A549 (cell line): ENCODE measurements at regions of chr2 and their contacts with region 1.

Region 1: DNA sequence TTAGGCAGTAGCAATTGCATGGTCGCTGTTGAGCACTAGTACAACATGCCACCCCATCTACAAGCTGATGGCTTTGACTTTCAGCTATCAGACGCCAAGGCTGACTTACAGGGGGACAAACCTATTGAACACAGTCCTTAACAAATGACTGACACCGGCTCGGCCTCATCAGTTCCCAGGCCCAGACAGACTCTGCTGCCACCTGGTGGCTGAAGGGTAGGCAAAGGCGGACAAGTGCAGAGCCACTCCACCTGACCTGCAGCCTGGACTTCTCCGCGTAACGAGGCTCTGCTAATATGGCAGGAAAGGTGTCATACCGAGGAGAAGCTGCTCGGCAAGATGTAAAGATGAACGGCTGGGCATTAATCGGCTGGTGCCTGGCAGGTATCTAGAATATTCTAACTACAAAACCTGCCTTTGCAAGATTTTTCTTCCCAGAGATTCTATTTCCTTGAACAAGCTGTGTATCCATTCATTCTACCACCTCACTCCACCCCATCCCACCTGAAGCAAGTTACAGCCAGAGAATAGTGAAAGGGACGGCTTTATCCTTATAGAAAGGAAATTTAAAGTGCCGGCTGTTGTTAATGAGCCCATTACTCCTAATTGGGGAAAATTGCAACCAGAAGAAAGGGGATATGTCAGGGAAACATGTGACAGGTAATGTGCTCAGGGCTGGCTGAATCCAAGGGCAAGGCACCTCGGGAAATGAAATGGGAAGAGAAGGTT is 67.4 kb downstream of the STEAP3 start:
- DNase-seq: peak; percentile 73 to 76
- ATAC-seq: peak; percentile 97 to 99
- H3K4me3 ChIP-seq: no peak overlapping the region
- H3K27ac ChIP-seq: no peak overlapping the region
- H3K4me1 ChIP-seq: no peaks in the 10 kb centered on the region
- CTCF ChIP-seq: peak; percentile 83
- EP300 ChIP-seq: no peak
- POLR2A ChIP-seq: no peak
- RAD21 ChIP-seq: peak; percentile 85 to 92

Region 2: GRCh38 chr2:119025762-119026389 is 265.1 kb before region 1 on chr2:
- CTCF ChIA-PET with region 1: interaction called, 11 read pairs
- POLR2A ChIA-PET with region 1: no interaction called
- DNase-seq: no peak
- ATAC-seq: no peak; a peak in 1 of 6 replicates
- H3K4me3 ChIP-seq: no peak overlapping the region
- H3K27ac ChIP-seq: no peak overlapping the region
- H3K4me1 ChIP-seq: no peaks in the 10 kb centered on the region
- CTCF ChIP-seq: no peak
- EP300 ChIP-seq: no peak
- POLR2A ChIP-seq: no peak
- RAD21 ChIP-seq: no peak

Region 3: GRCh38 chr2:119234377-119235019 is 56.5 kb before region 1 on chr2:
- CTCF ChIA-PET with region 1: interaction called, 15 read pairs
- POLR2A ChIA-PET with region 1: no interaction called
- DNase-seq: peak in 1 of 2 experiments; percentile 35
- ATAC-seq: peak; percentile 87 to 96
- H3K4me3 ChIP-seq: no peak overlapping the region
- H3K27ac ChIP-seq: peak overlapping the region in 1 of 2 experiments; percentile 9; a peak in 1 of 6 replicates
- H3K4me1 ChIP-seq: peaks cover 8% of the 10 kb centered on the region
- CTCF ChIP-seq: peak; percentile 59
- EP300 ChIP-seq: no peak
- POLR2A ChIP-seq: no peak
- RAD21 ChIP-seq: peak; percentile 66 to 71

Region 4: DNA sequence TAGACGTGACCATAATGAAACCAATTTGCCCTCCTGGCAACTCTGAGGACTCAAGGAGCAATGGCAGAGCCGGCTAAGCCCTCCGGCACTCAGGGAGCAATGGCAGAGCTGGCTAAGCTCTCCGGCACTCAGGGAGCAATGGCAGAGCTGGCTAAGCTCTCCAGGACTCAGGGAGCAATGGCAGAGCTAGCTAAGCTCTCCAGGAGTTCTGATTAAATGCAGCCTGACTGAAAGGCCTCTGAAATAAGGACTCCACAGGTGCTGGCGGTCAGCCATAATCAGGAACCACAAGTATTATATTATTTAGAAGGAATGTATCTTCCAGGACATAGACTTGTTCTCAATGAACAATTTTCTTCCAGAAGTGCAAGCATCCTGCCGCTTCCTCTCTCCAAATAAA is 10.4 kb after region 1 on chr2:
- CTCF ChIA-PET with region 1: interaction called, 23 read pairs
- POLR2A ChIA-PET with region 1: no interaction called
- DNase-seq: no peak
- ATAC-seq: no peak
- H3K4me3 ChIP-seq: no peak overlapping the region
- H3K27ac ChIP-seq: no peak overlapping the region
- H3K4me1 ChIP-seq: no peaks in the 10 kb centered on the region
- CTCF ChIP-seq: no peak
- EP300 ChIP-seq: no peak
- POLR2A ChIP-seq: no peak
- RAD21 ChIP-seq: no peak

Region 5: GRCh38 chr2:119678998-119679710 is 388.1 kb after region 1 on chr2 and contains the start of gene TMEM177:
- CTCF ChIA-PET with region 1: no interaction called
- POLR2A ChIA-PET with region 1: no interaction called
- DNase-seq: peak; percentile 88 to 93
- ATAC-seq: peak; percentile 92 to 96
- H3K4me3 ChIP-seq: peak within 1 kb of the TSS; percentile 88
- H3K27ac ChIP-seq: peak within 1 kb of the TSS; percentile 88 to 92
- H3K4me1 ChIP-seq: peaks cover 13% of the 10 kb centered on the region
- CTCF ChIP-seq: no peak
- EP300 ChIP-seq: no peak
- POLR2A ChIP-seq: peak; percentile 93
- RAD21 ChIP-seq: no peak
- polyA plus RNA-seq, gene TMEM177: 20.2 and 21.1 TPM in 2 replicates